WTC11 (cell line): ENCODE measurements at regions of chr1 and their contacts with region 1.

Region 1: DNA sequence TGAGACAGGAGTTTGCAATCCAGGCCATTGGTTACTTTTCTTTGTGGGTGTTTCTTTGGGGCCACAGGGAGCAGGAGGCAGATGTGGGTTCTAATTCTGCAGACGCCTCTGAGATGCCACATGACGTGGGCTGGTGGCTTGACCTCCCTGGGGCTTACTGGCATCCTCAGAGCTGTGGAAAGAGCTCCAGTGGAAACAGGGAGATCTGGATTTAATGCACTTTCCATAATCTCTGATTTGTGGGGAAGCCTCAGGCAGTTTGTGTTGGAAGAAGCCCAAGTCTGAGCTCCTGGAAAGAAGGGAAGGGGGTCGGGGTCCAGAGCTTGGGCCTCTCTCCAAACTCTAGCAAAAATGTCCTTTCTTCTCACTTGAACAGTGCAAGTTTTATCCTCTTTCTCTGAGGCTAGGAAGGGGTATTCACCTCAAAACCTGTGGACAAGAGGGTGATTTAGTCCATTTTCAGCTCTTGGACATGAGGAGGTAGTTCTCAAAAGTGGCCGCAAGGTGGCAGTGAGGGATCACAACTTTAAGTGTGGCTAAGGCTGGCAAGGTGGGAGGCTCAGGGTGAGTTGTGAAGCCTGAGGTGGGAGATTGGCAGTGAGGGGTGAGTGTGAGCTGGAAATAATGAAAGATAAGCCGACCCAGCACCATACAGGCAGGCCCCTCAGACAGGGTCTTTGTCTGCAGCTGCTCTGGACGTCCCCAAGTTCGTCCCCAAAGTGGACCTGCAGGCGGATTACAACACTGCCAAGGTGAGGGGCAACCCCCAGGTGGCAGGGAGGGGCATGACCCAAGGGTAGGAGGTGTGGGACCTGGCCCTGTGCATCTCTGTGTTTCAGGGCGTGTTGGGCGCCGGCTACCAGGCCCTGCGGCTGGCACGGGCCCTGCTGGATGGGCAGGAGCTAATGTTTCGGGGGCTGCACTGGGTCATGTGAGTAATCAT is 9.2 kb downstream of the IKBKE start:
- DNase-seq: peak; percentile 76
- ATAC-seq: peak; percentile 89
- H3K4me3 Mint-ChIP-seq: no peak overlapping the region
- H3K27ac Mint-ChIP-seq: no peak overlapping the region
- H3K4me1 Mint-ChIP-seq: peaks cover 4% of the 10 kb centered on the region
- H3K27me3 Mint-ChIP-seq: no peaks in the 10 kb centered on the region
- CTCF ChIP-seq: peak; percentile 70

Region 2: DNA sequence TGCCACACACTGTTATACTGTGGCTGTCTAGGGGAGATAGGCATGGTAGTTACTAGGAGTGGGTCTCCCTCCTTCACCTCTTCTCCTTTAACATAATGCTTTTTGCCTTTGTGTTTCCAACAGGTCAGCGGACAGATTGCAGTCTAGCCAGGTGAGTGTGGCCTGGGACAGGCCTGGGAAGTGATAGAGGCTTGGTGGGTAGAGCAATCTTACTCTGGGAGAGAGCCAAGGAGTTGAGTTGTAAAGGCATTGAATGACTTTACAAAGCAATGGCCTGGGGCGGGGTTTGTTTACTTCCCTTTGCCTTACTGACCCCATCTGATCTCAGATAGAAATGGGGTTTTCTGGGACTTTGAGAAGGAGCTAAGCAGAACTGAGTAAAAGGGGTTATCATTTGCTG is 60.2 kb before region 1 on chr1:
- CTCF ChIA-PET with region 1: no interaction called
- POLR2A ChIA-PET with region 1: no interaction called
- DNase-seq: no peak
- ATAC-seq: peak; percentile 44; the same call in 1 of the 2 replicates
- H3K4me3 Mint-ChIP-seq: no peak overlapping the region
- H3K27ac Mint-ChIP-seq: peak overlapping the region; percentile 69
- H3K4me1 Mint-ChIP-seq: no peaks in the 10 kb centered on the region; the same call in 1 of the 2 replicates
- H3K27me3 Mint-ChIP-seq: no peaks in the 10 kb centered on the region
- CTCF ChIP-seq: no peak

Region 3: DNA sequence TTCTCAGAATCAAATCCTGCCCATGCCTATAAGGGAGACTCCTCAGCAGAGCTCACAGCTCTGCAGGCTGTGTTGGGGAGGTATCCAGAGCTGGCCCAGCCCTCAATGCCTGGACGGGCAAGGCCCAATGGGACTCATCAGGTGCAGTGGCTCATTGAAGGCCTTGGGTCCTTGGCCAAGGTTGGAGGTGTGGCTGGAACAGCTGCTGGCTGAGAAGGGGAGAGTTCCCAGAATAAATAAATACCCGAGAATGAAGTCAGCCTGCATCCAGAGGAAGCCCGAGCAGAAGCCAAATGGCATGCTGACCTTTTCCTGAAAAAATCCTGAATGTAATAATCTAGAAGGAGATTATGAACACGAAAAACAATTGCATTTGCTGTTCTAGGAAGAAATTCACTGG is 34.3 kb before region 1 on chr1:
- CTCF ChIA-PET with region 1: no interaction called
- POLR2A ChIA-PET with region 1: no interaction called
- DNase-seq: no peak
- ATAC-seq: no peak
- H3K4me3 Mint-ChIP-seq: no peak overlapping the region
- H3K27ac Mint-ChIP-seq: no peak overlapping the region
- H3K4me1 Mint-ChIP-seq: no peaks in the 10 kb centered on the region
- H3K27me3 Mint-ChIP-seq: no peaks in the 10 kb centered on the region
- CTCF ChIP-seq: no peak

Region 4: DNA sequence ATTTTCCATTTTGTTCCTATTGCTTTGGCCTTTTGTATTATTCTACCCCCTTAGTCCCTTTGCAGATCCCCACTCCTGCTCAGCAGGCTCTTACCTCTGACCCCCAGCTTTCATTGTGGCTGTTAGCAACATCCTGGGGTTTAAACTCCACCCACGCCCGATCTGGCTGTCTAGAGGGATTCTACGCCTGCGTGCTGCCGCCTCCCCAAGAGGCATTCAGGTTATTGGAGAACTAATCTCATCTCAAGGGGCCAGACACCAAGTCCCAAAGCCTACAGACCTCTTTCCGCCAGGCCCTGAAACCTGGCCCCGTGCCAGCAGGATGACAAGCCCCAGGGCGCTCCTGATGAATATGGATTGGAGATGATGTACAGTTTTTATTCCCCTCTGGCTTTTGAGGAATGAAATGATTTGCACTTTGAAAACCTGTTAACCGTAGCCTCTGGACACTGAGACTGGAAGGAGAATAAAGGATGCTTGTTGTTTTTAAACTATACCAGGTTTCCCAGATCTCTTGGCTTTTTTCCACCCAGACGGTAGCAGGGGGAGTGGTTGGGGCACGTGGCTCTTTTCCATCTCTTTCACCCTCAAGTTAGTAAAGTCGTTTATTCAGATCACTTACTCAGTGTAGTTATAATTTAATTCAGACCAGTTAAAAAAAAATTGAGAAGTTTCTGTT is 23.6 kb before region 1 on chr1:
- CTCF ChIA-PET with region 1: interaction called, 10 read pairs
- POLR2A ChIA-PET with region 1: no interaction called
- DNase-seq: no peak
- ATAC-seq: peak; percentile 46
- H3K4me3 Mint-ChIP-seq: no peak overlapping the region
- H3K27ac Mint-ChIP-seq: peak overlapping the region; percentile 44; the same call in 1 of the 2 replicates
- H3K4me1 Mint-ChIP-seq: peaks cover 24% of the 10 kb centered on the region
- H3K27me3 Mint-ChIP-seq: no peaks in the 10 kb centered on the region
- CTCF ChIP-seq: no peak

Region 5: GRCh38 chr1:206521143-206521542 is 41.7 kb after region 1 on chr1:
- CTCF ChIA-PET with region 1: interaction called, 18 read pairs
- POLR2A ChIA-PET with region 1: interaction called, 3 read pairs
- DNase-seq: no peak
- ATAC-seq: no peak
- H3K4me3 Mint-ChIP-seq: no peak overlapping the region
- H3K27ac Mint-ChIP-seq: no peak overlapping the region
- H3K4me1 Mint-ChIP-seq: 0 out of 2 replicates have a peak, but pooled peaks cover 3% of the 10 kb centered on the region
- H3K27me3 Mint-ChIP-seq: no peaks in the 10 kb centered on the region
- CTCF ChIP-seq: no peak

Region 6: DNA sequence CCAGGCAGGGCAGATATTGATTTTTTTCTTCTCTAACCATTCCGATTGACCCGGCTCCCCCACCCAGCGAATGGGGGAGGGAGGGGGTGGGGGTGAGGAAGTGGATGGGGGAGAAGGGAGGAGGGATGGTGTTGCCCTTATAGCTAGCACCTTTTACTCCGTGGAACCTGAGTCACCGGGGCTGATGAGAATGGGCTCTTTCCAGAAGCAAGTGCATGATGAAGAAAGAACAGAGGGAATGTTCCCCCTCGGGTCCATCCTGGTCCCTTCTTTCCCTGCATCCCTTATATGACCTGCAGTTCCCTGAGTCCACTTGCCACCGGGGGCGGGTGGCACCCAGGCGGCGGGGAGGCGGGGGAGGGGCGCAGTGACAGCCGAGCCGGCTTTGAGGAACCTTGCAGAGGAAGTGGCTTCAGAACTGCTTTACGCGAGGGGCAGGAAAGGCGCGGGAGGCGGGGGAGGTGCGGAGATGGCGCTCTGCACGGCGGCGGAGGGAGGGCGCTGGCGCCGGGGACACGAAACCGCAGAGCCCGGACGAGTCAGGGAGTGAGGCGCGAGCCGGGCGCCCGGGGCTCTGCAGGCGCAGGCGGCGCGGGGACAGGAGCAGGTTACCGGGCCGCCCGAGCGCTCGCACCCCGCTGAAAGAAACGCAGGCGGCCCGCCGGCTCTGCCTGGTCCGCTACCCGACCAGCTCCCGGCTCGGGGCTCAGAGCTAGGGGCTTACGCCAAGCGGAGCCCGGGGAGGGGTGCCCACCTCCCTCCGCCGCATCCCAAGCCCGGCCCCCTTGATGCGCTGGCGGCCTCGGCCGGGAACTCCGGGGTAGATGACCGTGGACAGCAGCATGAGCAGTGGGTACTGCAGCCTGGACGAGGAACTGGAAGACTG is 77.5 kb after region 1 on chr1:
- CTCF ChIA-PET with region 1: interaction called, 10 read pairs
- POLR2A ChIA-PET with region 1: no interaction called
- DNase-seq: peak; percentile 73
- ATAC-seq: peak; percentile 83
- H3K4me3 Mint-ChIP-seq: peak overlapping the region; percentile 70
- H3K27ac Mint-ChIP-seq: no peak overlapping the region
- H3K4me1 Mint-ChIP-seq: peaks cover 35% of the 10 kb centered on the region
- H3K27me3 Mint-ChIP-seq: peaks cover 36% of the 10 kb centered on the region
- CTCF ChIP-seq: no peak

Region 7: DNA sequence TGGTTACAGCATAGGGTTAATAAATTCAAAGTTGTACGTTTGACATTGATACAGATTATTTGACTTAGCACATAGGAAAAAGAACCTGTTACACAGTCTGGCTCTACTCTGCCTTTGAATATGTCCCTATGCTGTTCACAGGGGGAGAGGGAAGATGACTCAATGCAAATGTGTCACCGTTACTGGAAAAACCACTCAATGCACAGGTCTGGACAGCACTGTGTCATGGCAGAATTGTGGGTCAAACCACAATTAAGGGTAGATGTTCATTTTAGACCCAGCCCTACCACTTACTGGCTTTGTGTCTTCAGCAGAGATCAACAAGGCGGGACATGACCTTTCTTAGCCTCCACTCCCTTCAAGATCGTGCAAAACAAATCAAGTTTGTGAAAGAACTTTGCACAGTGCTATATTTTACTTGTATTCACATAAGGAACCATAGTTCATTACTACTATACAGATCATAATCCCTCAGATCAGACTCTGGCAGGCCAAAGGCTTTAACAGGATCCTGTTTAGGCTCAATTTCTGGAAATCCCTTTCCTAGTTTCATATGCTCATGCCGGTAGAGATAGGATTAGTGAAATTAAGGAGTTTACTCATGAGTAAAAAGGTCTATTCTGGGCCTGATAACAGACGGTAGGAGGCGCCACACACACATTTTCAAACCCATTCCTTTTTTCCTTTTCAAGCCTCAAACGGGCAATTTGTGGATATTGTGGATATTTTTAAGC is 110.7 kb after region 1 on chr1:
- CTCF ChIA-PET with region 1: interaction called, 51 read pairs
- POLR2A ChIA-PET with region 1: interaction called, 4 read pairs
- DNase-seq: peak; percentile 34
- ATAC-seq: no peak
- H3K4me3 Mint-ChIP-seq: no peak overlapping the region
- H3K27ac Mint-ChIP-seq: no peak overlapping the region
- H3K4me1 Mint-ChIP-seq: no peaks in the 10 kb centered on the region
- H3K27me3 Mint-ChIP-seq: no peaks in the 10 kb centered on the region
- CTCF ChIP-seq: peak; percentile 37; the same call in 1 of the 2 replicates

Region 8: DNA sequence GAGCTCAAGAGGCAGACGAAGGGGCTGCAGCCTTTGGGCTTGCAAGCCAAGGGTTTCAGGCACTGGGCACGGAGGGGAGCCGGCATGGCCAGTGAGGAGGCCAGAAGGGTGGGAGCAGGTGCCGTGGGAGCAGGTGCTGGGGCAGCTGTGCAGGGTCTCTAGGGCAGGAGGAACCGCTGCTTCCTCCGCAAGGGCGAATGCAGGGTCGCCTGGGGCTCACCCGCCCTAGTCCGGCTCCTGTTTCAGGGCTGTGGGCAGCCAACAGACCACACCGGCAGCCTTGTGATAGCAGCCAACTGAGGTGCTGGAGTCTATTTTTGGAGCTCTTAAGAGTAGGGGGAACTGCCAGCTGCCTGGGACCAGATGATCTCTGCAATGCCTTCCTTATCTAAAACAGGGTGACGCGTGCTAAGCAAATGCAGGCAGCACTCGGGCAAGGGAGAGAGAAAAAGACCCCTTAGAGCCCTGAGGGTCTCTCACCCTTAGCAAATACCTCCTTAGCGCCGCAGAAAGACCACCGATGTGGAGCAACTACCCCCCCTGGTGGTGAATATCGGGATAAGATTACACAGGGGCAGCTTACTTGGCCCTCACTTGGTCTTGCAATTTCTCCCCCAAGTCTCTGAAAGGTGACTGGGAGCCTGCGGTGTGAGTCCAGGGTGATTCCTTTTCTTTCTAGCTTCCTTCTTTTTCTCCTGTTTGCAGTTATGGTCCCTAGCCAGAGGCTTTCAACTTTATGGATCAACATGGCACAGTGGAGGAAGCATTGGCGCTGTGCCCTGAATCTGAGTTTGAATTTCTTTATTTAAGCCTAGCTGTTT is 184.6 kb after region 1 on chr1:
- CTCF ChIA-PET with region 1: interaction called, 17 read pairs
- POLR2A ChIA-PET with region 1: no interaction called
- DNase-seq: peak; percentile 83
- ATAC-seq: peak; percentile 90
- H3K4me3 Mint-ChIP-seq: peak overlapping the region; percentile 58
- H3K27ac Mint-ChIP-seq: no peak overlapping the region
- H3K4me1 Mint-ChIP-seq: peaks cover 9% of the 10 kb centered on the region; the same call in 1 of the 2 replicates
- H3K27me3 Mint-ChIP-seq: peaks cover 26% of the 10 kb centered on the region
- CTCF ChIP-seq: peak; percentile 86